PC-9 (cell line): ENCODE measurements at regions of chr3 and their contacts with region 1.

Region 1: GRCh38 chr3:188037216-188037718 is 116.7 kb upstream of the LPP start:
- DNase-seq: peak in 1 of 2 experiments; percentile 36
- H3K4me3 ChIP-seq: no peak overlapping the region
- H3K27ac ChIP-seq: peak overlapping the region; percentile 35
- H3K4me1 ChIP-seq: peaks cover 47% of the 10 kb centered on the region
- H3K27me3 ChIP-seq: no peaks in the 10 kb centered on the region
- CTCF ChIP-seq: peak; percentile 64

Region 2: GRCh38 chr3:187919048-187919447 is 118.2 kb before region 1 on chr3:
- CTCF ChIA-PET with region 1: no interaction called
- POLR2A ChIA-PET with region 1: no interaction called
- intact Hi-C with region 1: loop called (anchors 5 kb)
- DNase-seq: no peak
- H3K4me3 ChIP-seq: no peak overlapping the region
- H3K27ac ChIP-seq: no peak overlapping the region
- H3K4me1 ChIP-seq: peaks cover 94% of the 10 kb centered on the region
- H3K27me3 ChIP-seq: no peaks in the 10 kb centered on the region
- CTCF ChIP-seq: no peak

Region 3: DNA sequence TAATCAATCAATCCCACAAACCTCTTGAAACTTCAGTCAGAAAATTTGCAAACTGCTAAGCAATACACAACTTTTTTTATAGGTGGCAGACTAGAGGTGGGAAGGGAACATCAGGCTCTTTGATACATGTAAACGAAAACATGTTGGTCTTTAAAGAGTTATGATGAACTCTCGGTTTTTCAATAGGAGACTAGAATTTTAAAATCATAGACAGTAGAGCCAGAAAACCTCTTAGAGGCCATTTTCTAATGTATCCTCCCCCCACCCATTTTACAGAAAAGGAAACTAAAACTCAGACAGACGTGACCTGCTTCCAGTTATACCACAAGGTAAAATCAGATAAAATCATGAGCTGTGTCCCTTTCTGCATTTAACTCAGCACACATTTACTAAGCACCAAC is 62.4 kb before region 1 on chr3:
- CTCF ChIA-PET with region 1: no interaction called
- POLR2A ChIA-PET with region 1: interaction called, 7 read pairs
- intact Hi-C with region 1: loop called (anchors 2 kb)
- DNase-seq: no peak
- H3K4me3 ChIP-seq: no peak overlapping the region
- H3K27ac ChIP-seq: peak overlapping the region; percentile 35
- H3K4me1 ChIP-seq: peaks cover 76% of the 10 kb centered on the region
- H3K27me3 ChIP-seq: no peaks in the 10 kb centered on the region
- CTCF ChIP-seq: peak; percentile 42; the same call in 1 of the 2 replicates

Region 4: DNA sequence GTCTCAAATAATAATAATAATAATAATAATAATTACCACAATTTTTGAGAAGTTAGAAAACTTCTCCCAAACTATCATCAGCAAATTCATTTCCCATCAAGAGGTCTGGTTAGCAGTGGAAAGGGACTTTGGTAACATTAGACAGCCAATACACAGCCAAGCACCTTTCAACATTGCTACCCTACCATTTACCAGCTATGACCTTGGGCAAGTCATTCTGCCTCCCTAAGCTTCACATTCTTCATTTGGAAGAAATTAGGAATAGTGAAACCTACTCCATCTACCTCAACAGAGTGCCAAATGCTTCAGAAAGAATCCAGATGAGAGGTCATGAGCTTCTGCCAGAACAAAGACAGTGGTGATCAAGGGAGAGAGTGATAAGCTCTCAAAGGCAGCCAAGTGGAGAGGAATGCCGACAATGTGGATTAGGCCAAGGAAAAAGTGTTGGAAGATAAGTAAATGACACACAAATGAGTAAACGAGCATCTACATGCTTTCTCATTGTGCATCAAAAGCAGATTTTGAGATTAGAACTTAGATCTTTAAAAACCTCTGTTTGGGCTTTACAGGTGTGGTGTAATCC is 73.8 kb after region 1 on chr3:
- CTCF ChIA-PET with region 1: interaction called, 22 read pairs
- POLR2A ChIA-PET with region 1: no interaction called
- intact Hi-C with region 1: no loop called
- DNase-seq: no peak
- H3K4me3 ChIP-seq: no peak overlapping the region
- H3K27ac ChIP-seq: no peak overlapping the region
- H3K4me1 ChIP-seq: no peaks in the 10 kb centered on the region
- H3K27me3 ChIP-seq: no peaks in the 10 kb centered on the region
- CTCF ChIP-seq: no peak

Region 5: DNA sequence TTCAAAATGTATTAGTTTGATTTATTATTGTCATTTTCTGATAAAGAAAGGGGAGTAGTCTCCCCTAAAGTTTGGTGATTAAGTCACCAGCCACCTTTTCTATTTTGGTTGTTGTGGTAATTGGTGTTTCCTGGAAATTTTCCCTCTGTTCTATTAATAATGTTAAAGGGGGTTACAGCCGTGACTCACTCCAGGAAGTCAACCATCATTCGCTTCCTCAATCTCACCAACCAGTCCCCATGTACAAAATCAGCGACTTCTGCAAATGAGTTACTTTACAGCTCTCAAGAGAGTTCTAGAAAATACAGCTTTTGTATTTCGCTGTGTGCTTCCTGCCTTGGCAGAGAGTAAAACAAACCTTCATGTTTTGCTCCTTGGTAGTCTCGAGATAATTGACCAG is 401.8 kb after region 1 on chr3:
- CTCF ChIA-PET with region 1: no interaction called
- POLR2A ChIA-PET with region 1: no interaction called
- intact Hi-C with region 1: loop called (anchors 10 kb)
- DNase-seq: no peak
- H3K4me3 ChIP-seq: no peak overlapping the region
- H3K27ac ChIP-seq: no peak overlapping the region
- H3K4me1 ChIP-seq: no peaks in the 10 kb centered on the region
- H3K27me3 ChIP-seq: no peaks in the 10 kb centered on the region
- CTCF ChIP-seq: no peak